Naive thymus-derived CD8-positive, alpha-beta T cell (primary cell): ENCODE measurements at regions of chr13 and their contacts with region 1.

Region 1: GRCh38 chr13:26186118-26186870 is 35.8 kb downstream of the RNF6 start:
- DNase-seq: peak; percentile 85 to 93 (median 88)
- ATAC-seq: peak; percentile 81 to 85
- H3K4me3 Mint-ChIP-seq: peak overlapping the region; percentile 85 to 99 (median 93)
- H3K27ac Mint-ChIP-seq: peak overlapping the region; percentile 91 to 99 (median 96)
- H3K4me1 Mint-ChIP-seq: peaks cover 5 to 39% (median 26%) of the 10 kb centered on the region in 4 donors
- H3K27me3 Mint-ChIP-seq: peaks cover 0 to 1% (median 0%) of the 10 kb centered on the region in 5 donors

Region 2: GRCh38 chr13:26221721-26222519 is 35.6 kb after region 1 on chr13 and contains the start of gene RNF6:
- POLR2A ChIA-PET with region 1: interaction called, 48 read pairs
- DNase-seq: peak; percentile 71 to 95 (median 87)
- ATAC-seq: peak; percentile 93 to 95
- H3K4me3 Mint-ChIP-seq: peak within 1 kb of the TSS; percentile 91 to 100 (median 98)
- H3K27ac Mint-ChIP-seq: peak within 1 kb of the TSS; percentile 92 to 100 (median 100)
- H3K4me1 Mint-ChIP-seq: peaks cover 9 to 43% (median 41%) of the 10 kb centered on the region in 4 donors
- H3K27me3 Mint-ChIP-seq: no peaks in the 10 kb centered on the region
- polyA plus RNA-seq, gene RNF6: 23.8 to 40.1 (median 25.2) TPM

Region 3: DNA sequence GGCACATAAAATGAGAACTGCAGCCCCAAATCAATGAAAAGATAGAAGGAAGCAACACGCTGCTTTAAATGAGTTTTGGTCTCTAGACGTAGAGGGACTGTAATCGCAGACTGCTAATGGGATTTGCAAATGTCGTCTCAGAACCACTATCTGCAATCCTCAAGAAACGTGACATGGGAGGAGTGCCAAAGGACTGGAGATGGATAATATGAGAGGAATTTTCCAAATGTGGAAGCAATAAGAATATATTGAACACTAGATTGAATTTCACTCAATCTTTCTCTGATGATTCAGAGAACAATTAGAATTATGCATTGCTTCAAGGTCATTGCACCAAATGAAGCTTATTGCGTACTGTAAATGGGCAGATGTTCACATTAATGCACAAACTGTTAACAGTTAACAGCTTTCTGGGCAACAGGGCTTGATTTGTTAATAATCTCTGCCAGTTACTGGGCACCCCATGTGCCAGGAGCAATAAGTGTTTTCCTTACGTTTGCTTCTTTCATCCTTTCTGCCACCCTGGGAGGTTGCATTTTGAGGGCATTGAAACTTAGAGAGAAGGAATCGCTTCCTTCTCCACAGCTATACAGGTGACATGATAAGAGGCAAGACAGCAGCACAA is 308.4 kb after region 1 on chr13:
- POLR2A ChIA-PET with region 1: interaction called, 31 read pairs
- DNase-seq: no peak
- ATAC-seq: no peak
- H3K4me3 Mint-ChIP-seq: no peak overlapping the region
- H3K27ac Mint-ChIP-seq: no peak overlapping the region
- H3K4me1 Mint-ChIP-seq: peaks cover 0 to 3% (median 1%) of the 10 kb centered on the region in 4 donors
- H3K27me3 Mint-ChIP-seq: peaks cover 6 to 62% (median 24%) of the 10 kb centered on the region in 5 donors